Mammary epithelial cell (primary cell): ENCODE measurements at regions of chr21 and their contacts with region 1.

Region 1: GRCh38 chr21:44742418-44743153 is 31.2 kb upstream of the TSPEAR start:
- DNase-seq: peak; percentile 17
- H3K4me3 ChIP-seq: no peak overlapping the region
- H3K27ac ChIP-seq: no peak overlapping the region
- H3K4me1 ChIP-seq: no peaks in the 10 kb centered on the region
- H3K27me3 ChIP-seq: no peaks in the 10 kb centered on the region
- CTCF ChIP-seq: peak; percentile 12 to 51

Region 2: DNA sequence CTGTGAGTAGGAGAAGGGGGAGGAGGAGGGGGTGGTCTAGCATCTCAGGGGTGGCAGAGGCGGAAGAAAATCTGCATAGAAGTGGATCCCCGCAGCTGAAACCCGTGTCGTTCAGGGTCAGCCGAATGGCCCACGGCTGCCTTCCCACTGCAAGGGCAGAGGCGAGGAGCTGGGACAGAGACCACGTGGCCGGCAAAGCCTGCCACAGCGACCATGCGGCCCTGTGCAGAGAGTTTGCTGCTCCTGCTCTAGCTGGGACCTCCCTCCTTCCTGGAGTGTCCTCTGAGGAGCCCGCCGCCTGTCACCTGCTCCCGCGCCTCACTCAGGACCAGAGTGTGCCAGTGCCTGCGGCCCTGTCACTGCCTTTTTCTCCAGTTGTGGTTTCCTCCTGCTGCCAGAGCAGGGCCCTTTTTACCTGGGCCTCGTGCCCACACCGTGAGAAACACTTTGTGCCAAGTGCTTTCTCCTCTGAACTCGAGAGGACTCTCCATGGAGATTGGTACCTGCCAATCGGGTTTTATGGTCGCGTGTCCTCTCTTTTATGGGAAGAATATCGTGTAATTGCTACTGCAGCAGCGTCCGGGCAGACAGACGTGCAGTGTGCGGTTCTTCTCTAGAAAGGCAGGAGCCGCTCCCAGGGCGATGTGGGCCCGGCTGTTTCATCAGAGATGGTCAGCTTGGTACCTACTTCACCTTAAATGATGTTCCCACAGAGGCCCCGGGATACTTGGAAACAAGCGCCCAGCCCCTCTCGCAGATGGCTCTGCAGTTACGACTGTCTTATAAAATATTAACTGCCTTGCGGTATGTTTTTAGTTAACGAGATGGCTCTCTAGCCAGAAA is 394.5 kb before region 1 on chr21:
- CTCF ChIA-PET with region 1: interaction called, 18 read pairs
- dilution Hi-C with region 1: no loop called
- in situ Hi-C with region 1: no loop called
- intact Hi-C with region 1: no loop called
- DNase-seq: no peak
- H3K4me3 ChIP-seq: no peak overlapping the region
- H3K27ac ChIP-seq: no peak overlapping the region
- H3K4me1 ChIP-seq: no peaks in the 10 kb centered on the region
- H3K27me3 ChIP-seq: peaks cover 15% of the 10 kb centered on the region
- CTCF ChIP-seq: no peak

Region 3: GRCh38 chr21:44510508-44511210 is 231.9 kb before region 1 on chr21:
- CTCF ChIA-PET with region 1: interaction called, 7 read pairs
- dilution Hi-C with region 1: loop called (anchors 5 kb)
- in situ Hi-C with region 1: no loop called
- intact Hi-C with region 1: loop called (anchors 1 kb)
- DNase-seq: peak; percentile 56
- H3K4me3 ChIP-seq: peak overlapping the region in 2 of 3 experiments; percentile 37 to 46
- H3K27ac ChIP-seq: no peak overlapping the region
- H3K4me1 ChIP-seq: peaks cover 10% of the 10 kb centered on the region
- H3K27me3 ChIP-seq: peaks cover 2% of the 10 kb centered on the region
- CTCF ChIP-seq: peak; percentile 69 to 92

Region 4: GRCh38 chr21:44647222-44647552 is 95.4 kb before region 1 on chr21:
- CTCF ChIA-PET with region 1: no interaction called
- dilution Hi-C with region 1: loop called (anchors 5 kb)
- in situ Hi-C with region 1: no loop called
- intact Hi-C with region 1: no loop called
- DNase-seq: no peak
- H3K4me3 ChIP-seq: no peak overlapping the region
- H3K27ac ChIP-seq: no peak overlapping the region
- H3K4me1 ChIP-seq: no peaks in the 10 kb centered on the region
- H3K27me3 ChIP-seq: peaks cover 3% of the 10 kb centered on the region
- CTCF ChIP-seq: no peak

Region 5: GRCh38 chr21:44677881-44678280 is 64.7 kb before region 1 on chr21:
- CTCF ChIA-PET with region 1: no interaction called
- dilution Hi-C with region 1: loop called (anchors 5 kb)
- in situ Hi-C with region 1: no loop called
- intact Hi-C with region 1: no loop called
- DNase-seq: no peak
- H3K4me3 ChIP-seq: no peak overlapping the region
- H3K27ac ChIP-seq: no peak overlapping the region
- H3K4me1 ChIP-seq: no peaks in the 10 kb centered on the region
- H3K27me3 ChIP-seq: peaks cover 4% of the 10 kb centered on the region
- CTCF ChIP-seq: no peak

Region 6: DNA sequence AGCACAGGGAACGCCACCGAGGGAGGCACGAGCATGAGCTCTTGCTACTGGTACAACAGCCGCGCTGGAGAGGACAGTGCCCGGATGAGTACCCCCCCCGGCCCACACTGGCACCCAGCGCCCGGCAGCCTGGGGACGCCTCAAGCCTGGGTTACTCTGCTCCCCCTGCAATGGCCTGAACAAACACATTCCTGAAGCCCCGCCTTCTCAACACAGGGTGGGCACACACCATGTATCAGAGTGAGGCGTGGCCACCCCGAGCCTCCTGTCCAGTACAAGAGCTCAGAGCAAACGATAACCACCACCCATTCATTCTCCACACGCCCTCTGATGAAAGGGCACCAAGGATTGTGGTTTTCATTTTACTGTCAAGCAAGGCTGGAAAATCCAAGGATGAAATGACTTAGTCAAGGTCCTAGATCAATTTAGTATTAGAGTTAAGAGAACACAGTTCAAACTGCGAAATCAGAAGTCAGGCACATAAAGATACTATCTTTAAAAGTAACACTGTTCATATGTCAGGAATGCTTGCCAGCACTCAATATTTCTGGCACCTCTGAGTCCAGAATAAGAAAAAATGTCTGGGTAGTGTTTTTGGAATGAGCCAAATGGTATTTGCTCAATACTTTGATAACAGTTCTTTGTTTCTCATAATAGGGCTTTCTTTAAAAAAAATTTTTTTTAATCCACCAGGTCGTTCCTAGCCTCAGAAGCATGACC is 37.0 kb after region 1 on chr21:
- CTCF ChIA-PET with region 1: no interaction called
- dilution Hi-C with region 1: loop called (anchors 5 kb)
- in situ Hi-C with region 1: no loop called
- intact Hi-C with region 1: no loop called
- DNase-seq: peak; percentile 69
- H3K4me3 ChIP-seq: no peak overlapping the region
- H3K27ac ChIP-seq: no peak overlapping the region
- H3K4me1 ChIP-seq: peaks cover 16% of the 10 kb centered on the region
- H3K27me3 ChIP-seq: no peaks in the 10 kb centered on the region
- CTCF ChIP-seq: no peak

Region 7: DNA sequence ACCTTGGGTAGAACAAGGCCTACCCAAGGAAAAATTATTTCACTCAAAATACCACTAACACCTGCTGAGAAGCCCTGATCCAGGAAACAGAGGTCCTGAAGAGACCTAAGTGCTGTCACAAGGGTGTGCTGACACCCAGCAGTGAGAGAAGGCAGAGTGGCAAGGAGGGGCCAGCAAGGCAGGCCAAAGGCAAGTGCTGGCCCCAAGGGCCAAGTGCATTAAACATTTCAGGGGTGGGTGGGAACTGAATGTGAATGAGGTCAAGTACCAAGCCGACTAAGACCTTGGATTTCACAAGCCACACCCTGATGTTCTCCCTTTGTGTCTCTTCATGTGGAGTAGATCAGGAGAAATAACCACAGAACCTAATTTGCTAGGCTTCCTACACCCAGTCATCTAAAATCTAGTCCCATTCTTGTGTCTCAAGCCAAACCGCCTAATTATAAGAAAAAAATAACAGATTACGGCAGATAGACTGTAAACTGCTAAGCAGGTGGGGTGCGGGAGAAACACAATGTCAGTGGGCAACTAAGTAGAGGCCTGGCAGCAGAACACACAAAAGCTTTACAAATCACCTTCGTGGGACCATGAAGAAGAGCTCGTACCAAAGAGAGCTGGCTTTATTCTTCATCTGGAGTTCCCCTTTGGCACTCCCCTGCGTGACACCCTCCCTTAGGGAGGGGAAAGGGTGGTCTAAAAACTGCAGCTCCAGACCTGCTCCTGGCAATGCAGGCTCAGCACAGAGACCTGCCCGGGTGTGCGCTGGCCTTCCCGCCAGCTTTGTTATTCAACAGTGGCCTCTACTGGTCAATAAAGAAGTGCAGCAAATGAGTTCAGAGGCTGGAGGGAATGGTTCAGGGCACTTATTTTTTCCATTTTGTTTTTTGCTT is 50.4 kb after region 1 on chr21:
- CTCF ChIA-PET with region 1: interaction called, 12 read pairs
- dilution Hi-C with region 1: no loop called
- in situ Hi-C with region 1: no loop called
- intact Hi-C with region 1: loop called (anchors 1 kb)
- DNase-seq: peak; percentile 51
- H3K4me3 ChIP-seq: no peak overlapping the region
- H3K27ac ChIP-seq: no peak overlapping the region
- H3K4me1 ChIP-seq: peaks cover 6% of the 10 kb centered on the region
- H3K27me3 ChIP-seq: no peaks in the 10 kb centered on the region
- CTCF ChIP-seq: peak; percentile 71 to 82

Region 8: DNA sequence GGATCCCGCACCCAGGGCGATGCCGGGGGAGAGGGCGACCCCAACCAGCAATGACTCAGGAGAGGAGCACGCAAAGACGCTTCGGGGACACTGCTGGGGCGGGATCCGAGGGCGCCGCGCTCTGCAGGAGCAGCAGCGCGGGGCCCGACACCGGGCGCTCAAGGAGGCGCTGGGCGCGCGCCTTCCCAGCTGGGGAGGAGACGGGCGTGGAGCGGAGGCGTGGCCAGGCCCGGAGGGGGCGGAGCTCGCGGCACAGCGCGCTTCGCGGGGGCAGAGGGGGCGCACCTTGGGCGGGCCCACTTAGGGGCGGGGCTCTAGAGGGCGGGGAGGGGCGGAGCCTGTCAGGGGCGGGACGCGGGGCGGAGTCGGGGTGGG is 74.9 kb after region 1 on chr21:
- CTCF ChIA-PET with region 1: no interaction called
- dilution Hi-C with region 1: no loop called
- in situ Hi-C with region 1: no loop called
- intact Hi-C with region 1: no loop called
- DNase-seq: peak; percentile 83
- H3K4me3 ChIP-seq: peak overlapping the region; percentile 61 to 80 (median 77)
- H3K27ac ChIP-seq: no peak overlapping the region
- H3K4me1 ChIP-seq: peaks cover 5% of the 10 kb centered on the region
- H3K27me3 ChIP-seq: no peaks in the 10 kb centered on the region
- CTCF ChIP-seq: no peak